Vagina (tissue), 2 donors: ENCODE measurements at regions of chr2 and their contacts with region 1.

Region 1: DNA sequence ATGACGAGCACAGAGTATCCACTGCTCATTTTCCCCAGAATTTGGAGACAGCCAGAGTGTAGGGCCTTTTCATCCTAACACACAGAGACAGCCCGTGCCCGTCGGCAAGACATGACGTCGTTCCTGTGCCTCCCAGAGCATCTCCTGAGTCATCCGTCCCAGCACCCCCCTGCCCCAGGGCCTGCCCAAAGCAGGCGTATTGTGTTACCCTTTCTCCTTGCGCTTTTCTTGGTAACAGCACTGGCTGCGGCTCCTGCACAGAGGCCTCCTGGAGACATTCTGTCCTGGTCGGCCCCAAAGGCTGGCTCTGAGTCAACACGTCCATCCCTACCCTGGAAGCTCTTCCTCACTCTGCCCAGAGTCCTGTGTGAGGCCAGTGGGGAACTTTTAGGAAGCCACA is 217.1 kb downstream of the KLHL29 start:
- DNase-seq: peak in 1 of 2 donors; percentile 93
- H3K4me3 ChIP-seq: no peak overlapping the region
- H3K27ac ChIP-seq: peak overlapping the region; percentile 34
- H3K4me1 ChIP-seq: peaks cover 10% of the 10 kb centered on the region
- H3K27me3 ChIP-seq: no peaks in the 10 kb centered on the region
- CTCF ChIP-seq: no peak
- POLR2A ChIP-seq: no peak

Region 2: DNA sequence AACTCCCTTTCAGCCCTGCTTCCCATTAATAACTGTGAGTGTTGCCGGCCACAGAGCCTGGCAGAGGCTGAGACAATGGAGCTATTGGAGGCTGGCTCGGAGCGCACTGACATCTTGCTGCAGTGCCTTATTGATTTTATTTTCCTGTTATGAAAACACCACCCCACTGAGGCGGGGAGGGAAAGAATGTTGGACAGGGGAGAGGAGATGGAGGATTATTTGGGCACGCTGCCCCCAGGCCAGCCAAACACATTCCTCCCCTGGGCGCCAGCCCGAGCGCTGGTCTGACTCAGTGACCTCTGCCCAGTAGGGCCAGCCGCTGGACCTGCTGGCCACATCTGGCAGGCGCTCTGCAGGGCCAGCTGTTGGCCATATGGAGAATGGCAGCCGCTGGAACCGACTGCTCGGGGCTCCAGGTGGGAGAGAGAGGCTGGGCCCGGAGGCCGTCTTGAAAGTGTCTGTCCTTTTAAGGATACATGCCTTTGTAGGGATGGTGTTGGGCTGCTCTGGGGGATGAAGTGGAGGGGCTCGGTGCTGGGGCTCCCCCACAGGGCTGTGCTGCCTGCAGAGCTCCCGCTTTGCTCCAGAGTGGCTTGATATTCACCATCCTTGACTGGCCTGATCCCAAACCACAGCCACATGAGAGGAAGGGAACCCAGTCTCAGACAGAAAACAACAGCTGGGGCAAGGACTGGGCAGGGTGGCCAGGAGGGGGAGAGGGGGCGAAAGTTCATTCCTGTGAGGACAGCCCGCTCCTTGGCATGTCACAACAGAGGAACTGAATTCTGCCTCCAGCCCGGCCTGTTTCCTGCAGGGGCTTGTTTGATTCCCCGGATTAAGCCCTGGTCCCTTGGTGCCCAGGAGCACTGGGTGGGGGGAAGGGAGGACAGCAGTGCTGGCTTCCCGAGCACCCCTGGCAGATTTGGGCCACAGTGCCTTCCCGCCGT is 38.2 kb before region 1 on chr2:
- intact Hi-C with region 1: loop called (anchors 5 kb)
- DNase-seq: no peak
- H3K4me3 ChIP-seq: no peak overlapping the region
- H3K27ac ChIP-seq: peak overlapping the region; percentile 77
- H3K4me1 ChIP-seq: peaks cover 58% of the 10 kb centered on the region
- H3K27me3 ChIP-seq: no peaks in the 10 kb centered on the region
- CTCF ChIP-seq: no peak
- POLR2A ChIP-seq: no peak